ENCODE measurements at regions of chr4 and their contacts with region 1.

Region 1: DNA sequence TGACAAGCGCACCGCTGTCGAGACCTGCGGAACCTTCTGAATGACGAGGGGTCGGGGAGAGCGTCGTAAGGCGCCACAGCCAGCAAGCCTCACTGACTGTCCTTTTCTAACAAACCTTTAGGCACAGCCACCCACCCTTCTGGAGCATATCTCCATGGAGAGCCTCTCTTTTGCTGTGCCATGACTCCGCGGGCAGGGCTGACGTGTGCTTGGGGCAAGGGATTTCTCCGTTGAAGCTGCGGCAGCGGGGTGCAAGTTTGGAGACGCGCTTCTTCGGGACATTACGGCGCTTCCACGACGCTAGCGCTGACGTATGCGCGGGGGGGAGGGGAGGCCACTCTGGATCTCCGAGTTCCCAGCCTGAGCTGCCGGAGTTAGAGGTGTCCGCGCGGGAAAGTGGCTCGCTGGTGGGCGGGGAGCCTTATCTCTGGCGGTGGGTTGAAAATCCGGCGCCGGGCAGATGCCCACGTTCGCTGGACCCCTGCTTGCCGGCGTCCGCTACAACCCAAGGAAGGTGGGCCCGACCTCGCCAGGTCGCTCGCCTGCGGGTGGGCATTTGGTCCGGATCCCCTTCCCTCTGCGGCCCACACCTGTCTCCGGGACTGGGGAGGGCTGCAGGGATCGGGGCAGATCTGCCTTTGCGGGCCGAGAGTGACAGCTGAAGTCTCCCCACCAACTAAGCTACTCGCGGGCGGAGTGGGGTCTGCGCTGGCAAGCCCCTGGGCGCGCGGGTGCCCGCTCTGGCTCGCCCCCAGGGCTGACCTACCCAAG is 543 bp upstream of the SLC10A7 start:
- DNase-seq: peak; percentile 60 to 90 (median 87)
- ATAC-seq: peak; percentile 82
- H3K4me3 ChIP-seq: peak overlapping the region; percentile 76 to 84
- H3K4me3 Mint-ChIP-seq: no peak overlapping the region
- H3K27ac ChIP-seq: peak overlapping the region; percentile 68 to 71
- H3K27ac Mint-ChIP-seq: no peak overlapping the region
- H3K4me1 ChIP-seq: peaks cover 16% of the 10 kb centered on the region
- H3K4me1 Mint-ChIP-seq: peaks cover 31% of the 10 kb centered on the region
- H3K27me3 ChIP-seq: no peaks in the 10 kb centered on the region
- H3K27me3 Mint-ChIP-seq: no peaks in the 10 kb centered on the region
- CTCF ChIP-seq: no peak

Region 2: GRCh38 chr4:145618932-145619638 is 903.2 kb before region 1 on chr4 and contains the start of gene MMAA:
- CTCF ChIA-PET with region 1: no interaction called
- POLR2A ChIA-PET with region 1: no interaction called
- intact Hi-C with region 1: loop called (anchors 5 kb)
- DNase-seq: peak; percentile 86 to 97 (median 94)
- ATAC-seq: peak; percentile 93
- H3K4me3 ChIP-seq: peak within 1 kb of the TSS; percentile 89 to 97
- H3K4me3 Mint-ChIP-seq: peak within 1 kb of the TSS; percentile 96
- H3K27ac ChIP-seq: peak within 1 kb of the TSS; percentile 91 to 97
- H3K27ac Mint-ChIP-seq: peak within 1 kb of the TSS; percentile 98
- H3K4me1 ChIP-seq: peaks cover 22% of the 10 kb centered on the region
- H3K4me1 Mint-ChIP-seq: peaks cover 45% of the 10 kb centered on the region
- H3K27me3 ChIP-seq: no peaks in the 10 kb centered on the region
- H3K27me3 Mint-ChIP-seq: no peaks in the 10 kb centered on the region
- CTCF ChIP-seq: peak; percentile 38
- total RNA-seq, gene MMAA: 7.6 to 9.4 TPM

Region 3: DNA sequence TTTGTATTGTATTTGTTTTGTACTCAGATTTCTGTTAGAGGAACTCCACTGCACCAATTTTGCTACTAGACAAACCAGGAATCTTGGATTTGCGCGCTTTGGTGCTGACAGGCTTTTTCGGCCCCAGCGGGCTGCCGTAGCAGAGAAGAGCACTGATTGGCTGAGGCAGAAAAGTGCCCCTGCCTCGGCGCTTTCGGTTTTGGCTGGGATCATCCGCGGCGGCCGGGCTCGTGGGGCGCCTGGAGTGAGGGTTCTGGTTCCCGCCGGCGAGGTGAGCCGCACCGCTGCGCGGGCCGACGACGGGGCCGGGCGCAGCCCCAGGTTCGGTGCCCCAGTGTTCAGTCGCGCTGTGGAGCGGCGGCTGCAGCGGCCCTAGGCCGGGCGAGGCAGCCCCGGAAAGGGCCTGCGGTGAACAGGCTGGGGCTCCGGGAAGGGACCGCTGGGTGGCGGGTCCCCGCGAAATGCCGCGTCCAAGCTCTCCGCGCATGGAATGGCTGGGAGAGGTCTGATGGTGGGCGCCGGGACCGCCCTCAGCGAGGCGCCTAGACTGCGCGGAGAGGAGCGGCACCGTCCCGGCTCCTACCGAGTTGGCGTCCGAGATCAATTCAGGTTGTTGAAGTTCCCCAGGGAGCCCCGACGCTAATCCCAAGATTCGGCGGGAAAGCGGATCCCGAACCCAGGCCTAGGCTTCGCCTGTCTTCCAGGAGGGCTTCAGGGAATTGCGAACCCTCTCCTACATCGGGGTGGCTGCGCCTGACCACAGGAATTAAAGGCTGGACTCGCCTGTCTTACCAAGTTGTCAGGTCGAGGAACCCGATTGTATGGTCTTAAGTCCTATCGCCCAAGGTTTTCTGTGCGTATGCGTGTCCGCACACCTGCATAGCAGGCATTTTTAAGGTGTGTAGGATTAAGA is 346.5 kb before region 1 on chr4 and contains the start of gene LSM6:
- CTCF ChIA-PET with region 1: no interaction called
- POLR2A ChIA-PET with region 1: no interaction called
- intact Hi-C with region 1: loop called (anchors 2 kb)
- DNase-seq: peak; percentile 60 to 92 (median 79)
- ATAC-seq: peak; percentile 90
- H3K4me3 ChIP-seq: peak within 1 kb of the TSS; percentile 88 to 97
- H3K4me3 Mint-ChIP-seq: peak within 1 kb of the TSS; percentile 91
- H3K27ac ChIP-seq: peak within 1 kb of the TSS; percentile 69 to 83
- H3K27ac Mint-ChIP-seq: peak within 1 kb of the TSS; percentile 95
- H3K4me1 ChIP-seq: peaks cover 48% of the 10 kb centered on the region
- H3K4me1 Mint-ChIP-seq: peaks cover 59% of the 10 kb centered on the region
- H3K27me3 ChIP-seq: no peaks in the 10 kb centered on the region
- H3K27me3 Mint-ChIP-seq: no peaks in the 10 kb centered on the region
- CTCF ChIP-seq: no peak
- total RNA-seq, gene LSM6: 17.6 to 20.6 TPM

Region 4: GRCh38 chr4:147617173-147617840 is 1095.0 kb after region 1 on chr4 and contains the start of gene TMEM184C:
- CTCF ChIA-PET with region 1: no interaction called
- POLR2A ChIA-PET with region 1: no interaction called
- intact Hi-C with region 1: loop called in 1 of 2 experiments (anchors 10 kb)
- DNase-seq: peak; percentile 98 to 99 (median 99)
- ATAC-seq: peak; percentile 96
- H3K4me3 ChIP-seq: peak within 1 kb of the TSS; percentile 62 to 74
- H3K4me3 Mint-ChIP-seq: peak within 1 kb of the TSS; percentile 91
- H3K27ac ChIP-seq: peak within 1 kb of the TSS; percentile 81
- H3K27ac Mint-ChIP-seq: peak within 1 kb of the TSS; percentile 95
- H3K4me1 ChIP-seq: peaks cover 40% of the 10 kb centered on the region
- H3K4me1 Mint-ChIP-seq: peaks cover 46% of the 10 kb centered on the region
- H3K27me3 ChIP-seq: no peaks in the 10 kb centered on the region
- H3K27me3 Mint-ChIP-seq: no peaks in the 10 kb centered on the region
- CTCF ChIP-seq: no peak
- total RNA-seq, gene TMEM184C: 10.9 to 11.7 TPM

Region 5: GRCh38 chr4:147731580-147732517 is 1209.6 kb after region 1 on chr4 and contains the start of gene ARHGAP10:
- CTCF ChIA-PET with region 1: no interaction called
- POLR2A ChIA-PET with region 1: no interaction called
- intact Hi-C with region 1: loop called in 1 of 2 experiments (anchors 5 kb)
- DNase-seq: peak; percentile 18 to 79 (median 72)
- ATAC-seq: peak; percentile 66
- H3K4me3 ChIP-seq: peak within 1 kb of the TSS; percentile 91
- H3K4me3 Mint-ChIP-seq: peak within 1 kb of the TSS; percentile 90
- H3K27ac ChIP-seq: peak within 1 kb of the TSS; percentile 55 to 60
- H3K27ac Mint-ChIP-seq: peak within 1 kb of the TSS; percentile 83
- H3K4me1 ChIP-seq: peaks cover 18% of the 10 kb centered on the region
- H3K4me1 Mint-ChIP-seq: peaks cover 32% of the 10 kb centered on the region
- H3K27me3 ChIP-seq: no peaks in the 10 kb centered on the region
- H3K27me3 Mint-ChIP-seq: peaks cover 2% of the 10 kb centered on the region
- CTCF ChIP-seq: no peak
- total RNA-seq, gene ARHGAP10: 7.2 to 7.4 TPM

Measured in CD8-positive, alpha-beta T cell (primary cell).